Activated T-helper 2 cell treated with anti-CD3 and anti-CD28 coated beads, Interferon-gamma antibody, Interleukin-2, Interleukin-4, amounts not matched to agents 10 μg/mL and 5 μg/mL and 100 μg/mL, durations not matched to agents 14 hours and 24 hours and 36 hours (primary cell): ENCODE measurements at regions of chr3 and their contacts with region 1.

Region 1: DNA sequence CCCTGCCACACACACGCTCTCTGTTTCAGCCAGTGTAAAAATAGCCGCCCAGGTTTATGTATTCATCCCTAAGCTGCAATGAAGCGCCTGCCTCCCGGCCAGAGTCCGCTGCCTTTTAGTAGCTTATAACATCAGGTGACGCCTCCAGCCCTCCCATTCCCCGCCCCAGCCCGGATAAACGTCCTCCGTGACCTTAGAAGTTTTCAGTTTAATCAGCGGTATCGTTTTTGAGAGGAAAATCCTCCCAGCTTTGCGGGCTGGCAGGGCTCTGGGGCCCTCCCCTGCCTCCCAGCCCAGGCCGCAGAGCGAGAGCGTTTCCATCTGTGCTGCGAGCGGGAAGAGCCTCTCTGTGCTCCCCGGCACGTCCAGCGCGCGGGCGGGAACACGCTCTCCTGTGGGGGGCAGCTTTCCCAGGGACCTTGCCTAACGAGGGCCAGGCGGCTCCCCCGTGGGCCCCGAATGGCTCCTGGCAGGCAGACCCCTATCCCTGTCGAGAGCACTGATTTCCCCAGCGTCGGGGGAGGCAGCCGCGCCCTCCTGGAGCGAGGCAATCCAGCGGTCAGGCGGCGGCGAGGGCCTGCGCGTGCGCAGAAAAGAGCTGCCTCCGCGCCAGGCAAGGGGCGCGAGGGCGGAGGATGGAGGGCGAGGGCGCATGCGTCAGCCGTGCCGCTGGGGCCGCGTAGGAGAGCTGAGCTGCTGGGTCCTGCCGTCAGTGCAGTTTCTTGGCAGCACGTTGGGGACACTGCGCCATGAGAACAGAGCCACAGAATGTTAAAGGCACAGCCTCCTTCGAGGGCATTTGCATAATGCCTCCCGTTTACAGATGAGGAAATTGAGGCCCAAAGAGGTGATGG is 71.1 kb downstream of the CCNL1 start:
- DNase-seq: peak; percentile 93
- H3K4me3 Mint-ChIP-seq: peak overlapping the region; percentile 76
- H3K27ac Mint-ChIP-seq: peak overlapping the region; percentile 98
- H3K4me1 Mint-ChIP-seq: peaks cover 74% of the 10 kb centered on the region
- H3K27me3 Mint-ChIP-seq: no peaks in the 10 kb centered on the region

Region 2: DNA sequence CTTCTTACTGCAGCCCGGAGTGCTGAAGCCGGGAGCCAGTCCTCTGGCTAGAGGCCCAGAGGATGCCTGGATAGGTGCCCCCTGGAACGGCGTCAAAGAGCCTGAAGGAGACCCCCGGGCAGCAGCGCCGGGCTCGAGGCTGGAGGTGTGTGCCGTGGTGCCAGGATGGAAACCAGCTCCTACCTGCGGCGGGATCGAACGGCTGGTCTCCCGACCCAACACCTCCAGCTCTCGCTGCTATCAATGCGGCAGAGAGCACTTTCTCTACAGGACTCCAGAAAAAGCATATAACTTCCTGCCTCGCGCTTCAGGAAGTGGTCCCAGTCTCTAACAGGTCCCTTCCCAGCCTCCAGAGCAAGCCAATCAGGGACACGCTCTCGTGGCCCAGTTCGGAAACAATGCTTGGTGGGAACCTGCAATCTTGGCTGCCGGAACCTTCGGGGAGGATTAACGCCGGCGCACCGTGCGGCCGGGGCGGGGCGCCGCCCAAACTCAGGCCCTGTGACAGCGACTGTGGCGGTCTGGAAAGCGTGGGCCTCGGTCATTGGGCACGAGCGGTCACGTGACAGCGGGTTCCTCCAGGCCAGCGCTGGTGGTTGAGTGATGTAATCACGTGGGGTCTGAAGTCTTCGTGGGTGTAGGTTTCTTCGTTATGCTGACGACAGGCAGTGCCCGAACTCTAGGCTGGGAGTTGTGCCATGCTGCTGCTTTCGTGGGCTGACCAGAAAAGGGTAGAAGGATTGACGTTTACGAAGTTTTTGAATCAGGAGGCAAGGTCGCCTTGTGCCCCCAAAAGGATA is 1234.5 kb before region 1 on chr3 and contains the start of gene SLC33A1:
- intact Hi-C with region 1: loop called (anchors 1 kb)
- DNase-seq: peak; percentile 99
- H3K4me3 Mint-ChIP-seq: peak within 1 kb of the TSS; percentile 90
- H3K27ac Mint-ChIP-seq: peak within 1 kb of the TSS; percentile 99
- H3K4me1 Mint-ChIP-seq: peaks cover 25% of the 10 kb centered on the region
- H3K27me3 Mint-ChIP-seq: no peaks in the 10 kb centered on the region
- total RNA-seq, gene SLC33A1: 30.2 and 33.6 TPM in 2 replicates

Region 3: DNA sequence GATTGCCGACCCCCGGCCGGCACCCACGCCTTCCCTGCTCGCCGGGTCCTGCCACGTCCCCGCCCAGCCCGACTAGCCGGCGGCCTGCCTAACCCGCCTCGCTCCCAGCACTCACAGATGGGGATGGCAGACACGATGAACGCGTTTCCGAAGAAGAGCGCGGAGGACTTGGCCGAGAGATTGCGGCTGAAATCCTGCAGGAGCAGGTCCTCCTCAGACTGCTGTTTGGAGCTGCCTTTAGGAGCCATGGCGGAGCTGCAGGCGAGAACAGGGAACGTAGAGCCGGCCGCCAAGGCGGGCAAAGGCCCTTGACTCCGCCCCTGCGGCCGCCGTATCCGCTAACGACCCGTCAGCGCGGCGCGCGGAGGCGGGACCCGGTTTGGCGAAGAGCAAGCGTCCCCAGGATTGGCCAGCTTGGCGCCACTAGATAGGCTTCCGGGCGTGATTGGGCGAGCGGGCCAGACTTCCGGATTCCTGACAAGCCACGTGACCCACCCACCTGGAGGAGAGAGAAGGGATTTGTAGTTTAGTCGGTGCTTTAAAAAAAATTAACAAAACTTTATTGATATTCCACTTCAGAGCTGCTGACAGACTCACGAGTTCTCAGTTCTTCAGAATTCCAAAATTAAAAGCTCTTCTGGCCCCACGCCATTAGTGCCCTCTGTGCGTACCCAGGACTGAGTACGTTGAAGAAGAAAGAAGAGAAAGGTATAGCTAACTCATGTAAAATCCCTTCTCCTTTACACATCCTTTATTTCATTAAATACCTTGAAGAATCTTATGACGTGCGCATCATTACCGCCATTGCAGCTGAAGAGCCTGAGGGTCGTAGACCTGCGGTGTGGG is 533.8 kb before region 1 on chr3 and contains the start of gene SSR3:
- intact Hi-C with region 1: loop called (anchors 1 kb)
- DNase-seq: peak; percentile 98
- H3K4me3 Mint-ChIP-seq: peak within 1 kb of the TSS; percentile 96
- H3K27ac Mint-ChIP-seq: peak within 1 kb of the TSS; percentile 92
- H3K4me1 Mint-ChIP-seq: peaks cover 47% of the 10 kb centered on the region
- H3K27me3 Mint-ChIP-seq: no peaks in the 10 kb centered on the region
- total RNA-seq, gene SSR3: 193 and 197 TPM in 2 replicates

Region 4: GRCh38 chr3:156816800-156817645 is 271.8 kb before region 1 on chr3:
- intact Hi-C with region 1: loop called (anchors 1 kb)
- DNase-seq: peak; percentile 94
- H3K4me3 Mint-ChIP-seq: peak overlapping the region; percentile 84
- H3K27ac Mint-ChIP-seq: peak overlapping the region; percentile 95
- H3K4me1 Mint-ChIP-seq: peaks cover 67% of the 10 kb centered on the region
- H3K27me3 Mint-ChIP-seq: no peaks in the 10 kb centered on the region

Region 5: GRCh38 chr3:157064402-157064801 is 24.4 kb before region 1 on chr3:
- intact Hi-C with region 1: no loop called
- DNase-seq: no peak
- H3K4me3 Mint-ChIP-seq: no peak overlapping the region
- H3K27ac Mint-ChIP-seq: no peak overlapping the region
- H3K4me1 Mint-ChIP-seq: peaks cover 31% of the 10 kb centered on the region
- H3K27me3 Mint-ChIP-seq: peaks cover 8% of the 10 kb centered on the region

Region 6: GRCh38 chr3:157130467-157131251 is 41.8 kb after region 1 on chr3:
- intact Hi-C with region 1: loop called (anchors 1 kb)
- DNase-seq: peak; percentile 61
- H3K4me3 Mint-ChIP-seq: peak overlapping the region; percentile 52
- H3K27ac Mint-ChIP-seq: peak overlapping the region; percentile 95
- H3K4me1 Mint-ChIP-seq: peaks cover 79% of the 10 kb centered on the region
- H3K27me3 Mint-ChIP-seq: no peaks in the 10 kb centered on the region

Region 7: DNA sequence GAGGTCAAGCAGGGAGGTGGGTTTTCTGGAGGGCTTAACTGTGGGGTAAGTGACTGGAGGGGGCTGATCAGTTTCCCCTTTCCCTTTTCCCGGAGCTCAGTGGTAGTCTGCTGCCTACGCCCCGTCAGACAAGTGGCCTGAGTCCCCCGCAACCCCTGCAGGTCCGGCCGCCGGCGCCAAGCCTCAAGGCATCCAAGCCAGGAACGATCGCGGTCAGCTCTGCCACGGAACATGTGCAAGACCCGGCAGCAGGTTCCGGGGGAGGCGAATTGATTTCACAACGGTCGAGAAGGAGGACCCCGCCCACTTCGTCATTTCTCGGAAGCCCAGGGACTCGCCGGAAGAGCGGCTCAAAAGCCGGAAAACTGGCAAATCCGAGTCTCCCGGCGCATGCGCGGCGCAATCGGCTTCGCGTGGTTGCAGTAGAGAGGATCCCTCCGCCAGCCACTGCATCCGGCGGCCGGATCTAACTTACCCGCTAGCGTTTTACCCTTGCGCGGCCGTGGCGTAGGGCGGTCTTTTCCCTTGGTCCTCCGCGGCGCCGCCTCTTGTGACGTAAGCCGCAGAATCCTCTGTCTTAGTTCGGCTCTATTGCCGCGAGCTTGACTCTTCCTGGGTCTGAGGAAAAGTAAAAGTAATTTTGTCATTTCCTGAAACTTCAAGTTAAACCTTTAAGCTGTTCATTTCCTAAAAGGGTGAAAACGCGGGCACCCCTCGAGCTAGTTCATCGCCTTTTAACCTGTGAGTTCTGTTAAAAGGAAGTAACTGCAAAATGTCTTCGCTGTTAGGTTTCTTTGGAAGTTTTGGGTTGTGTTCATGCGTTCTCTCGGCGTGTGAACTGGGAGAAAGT is 86.0 kb after region 1 on chr3:
- intact Hi-C with region 1: loop called (anchors 1 kb)
- DNase-seq: peak; percentile 99
- H3K4me3 Mint-ChIP-seq: peak overlapping the region; percentile 97
- H3K27ac Mint-ChIP-seq: peak overlapping the region; percentile 96
- H3K4me1 Mint-ChIP-seq: peaks cover 38% of the 10 kb centered on the region
- H3K27me3 Mint-ChIP-seq: no peaks in the 10 kb centered on the region

Region 8: GRCh38 chr3:158570999-158571974 is 1482.5 kb after region 1 on chr3 and contains the start of gene MLF1:
- intact Hi-C with region 1: no loop called
- DNase-seq: peak; percentile 81
- H3K4me3 Mint-ChIP-seq: peak within 1 kb of the TSS; percentile 85
- H3K27ac Mint-ChIP-seq: peak within 1 kb of the TSS; percentile 72
- H3K4me1 Mint-ChIP-seq: peaks cover 11% of the 10 kb centered on the region
- H3K27me3 Mint-ChIP-seq: peaks cover 23% of the 10 kb centered on the region
- total RNA-seq, gene MLF1: 2.2 and 3.4 TPM in 2 replicates